Colonic mucosa (tissue), 4 donors: ENCODE measurements at regions of chr17 and their contacts with region 1.

Region 1: DNA sequence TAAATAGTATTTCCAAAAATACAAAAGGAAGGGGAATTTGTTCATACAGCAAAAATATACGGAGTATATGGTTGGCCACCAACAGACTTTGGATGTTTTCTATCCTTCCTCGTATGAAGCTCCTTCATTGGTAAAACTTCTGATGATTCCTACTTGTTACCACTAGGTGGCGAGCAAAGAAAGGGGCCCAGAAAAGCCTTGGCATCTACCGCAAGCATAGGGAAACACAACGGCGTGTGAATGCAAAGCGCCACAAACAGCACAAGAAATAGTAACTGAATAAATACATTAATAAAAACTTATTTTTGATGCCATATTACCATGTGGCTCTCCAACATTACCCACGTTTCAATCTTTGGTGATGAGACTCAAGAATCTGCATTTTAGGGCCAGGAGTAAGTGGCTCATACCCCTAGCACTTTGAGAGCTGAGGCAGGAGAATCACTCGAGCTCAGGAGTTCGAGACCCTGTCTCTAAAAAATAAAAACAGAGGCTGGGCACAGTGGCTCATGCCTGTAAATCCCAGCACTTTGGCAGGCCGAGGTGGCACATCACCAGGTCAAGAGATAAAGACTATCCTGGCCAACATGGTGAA is 34.5 kb downstream of the YWHAE start:
- DNase-seq: peak; percentile 70
- H3K4me3 ChIP-seq: no peak overlapping the region
- H3K27ac ChIP-seq: no peak overlapping the region
- H3K4me1 ChIP-seq: peaks cover 5% of the 10 kb centered on the region
- H3K27me3 ChIP-seq: no peaks in the 10 kb centered on the region
- CTCF ChIP-seq: peak; percentile 70

Region 2: GRCh38 chr17:1039511-1040215 is 325.9 kb before region 1 on chr17:
- intact Hi-C with region 1: no loop called
- DNase-seq: peak; percentile 45
- H3K4me3 ChIP-seq: no peak overlapping the region
- H3K27ac ChIP-seq: peak overlapping the region; percentile 45
- H3K4me1 ChIP-seq: no peaks in the 10 kb centered on the region
- H3K27me3 ChIP-seq: no peaks in the 10 kb centered on the region
- CTCF ChIP-seq: no peak

Region 3: DNA sequence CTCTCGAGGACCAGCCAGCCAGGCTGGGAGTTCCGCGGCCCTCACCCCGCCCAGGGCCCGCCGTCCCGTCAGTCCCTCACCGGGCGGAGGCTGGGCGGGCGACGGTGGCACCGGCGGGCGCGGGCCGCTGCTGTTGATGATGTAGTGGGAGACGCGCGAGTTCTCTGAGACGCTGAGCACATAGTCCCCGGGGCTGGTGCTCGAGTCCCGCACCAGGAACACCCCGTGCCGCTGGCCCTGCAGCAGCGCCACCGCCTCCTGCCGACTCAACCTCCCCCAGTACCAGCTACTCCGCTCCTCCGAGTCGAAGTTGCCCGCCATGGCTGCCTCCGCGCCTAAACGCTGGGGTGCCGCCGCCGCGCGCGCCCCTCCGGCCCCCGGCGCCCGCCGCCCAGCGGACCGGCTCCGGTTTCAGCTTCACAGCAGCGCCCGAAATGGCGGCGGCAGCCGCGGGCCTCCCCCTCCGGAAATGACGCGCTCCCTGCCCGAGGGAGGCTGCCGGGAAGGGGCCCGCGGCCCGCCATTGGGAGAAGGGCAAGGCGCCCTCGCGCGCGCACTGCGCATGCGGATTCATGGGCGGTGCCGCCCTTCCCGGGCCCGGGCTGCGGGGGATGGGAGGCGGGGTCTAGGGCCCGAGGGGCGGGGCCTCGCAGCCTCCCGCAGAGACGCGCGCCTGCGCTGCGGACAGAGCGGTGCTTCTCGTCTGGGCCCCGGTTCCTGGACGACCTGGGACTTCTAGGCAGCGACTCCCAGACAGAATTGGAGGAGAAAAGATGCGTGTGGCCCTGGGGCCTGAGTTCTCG is 90.5 kb after region 1 on chr17 and contains the start of gene CRK:
- intact Hi-C with region 1: loop called (anchors 10 kb)
- DNase-seq: peak; percentile 97
- H3K4me3 ChIP-seq: peak within 1 kb of the TSS; percentile 86
- H3K27ac ChIP-seq: peak within 1 kb of the TSS; percentile 93
- H3K4me1 ChIP-seq: peaks cover 13% of the 10 kb centered on the region
- H3K27me3 ChIP-seq: no peaks in the 10 kb centered on the region
- CTCF ChIP-seq: no peak
- total RNA-seq, gene CRK: 74.5 to 82.0 TPM

Region 4: DNA sequence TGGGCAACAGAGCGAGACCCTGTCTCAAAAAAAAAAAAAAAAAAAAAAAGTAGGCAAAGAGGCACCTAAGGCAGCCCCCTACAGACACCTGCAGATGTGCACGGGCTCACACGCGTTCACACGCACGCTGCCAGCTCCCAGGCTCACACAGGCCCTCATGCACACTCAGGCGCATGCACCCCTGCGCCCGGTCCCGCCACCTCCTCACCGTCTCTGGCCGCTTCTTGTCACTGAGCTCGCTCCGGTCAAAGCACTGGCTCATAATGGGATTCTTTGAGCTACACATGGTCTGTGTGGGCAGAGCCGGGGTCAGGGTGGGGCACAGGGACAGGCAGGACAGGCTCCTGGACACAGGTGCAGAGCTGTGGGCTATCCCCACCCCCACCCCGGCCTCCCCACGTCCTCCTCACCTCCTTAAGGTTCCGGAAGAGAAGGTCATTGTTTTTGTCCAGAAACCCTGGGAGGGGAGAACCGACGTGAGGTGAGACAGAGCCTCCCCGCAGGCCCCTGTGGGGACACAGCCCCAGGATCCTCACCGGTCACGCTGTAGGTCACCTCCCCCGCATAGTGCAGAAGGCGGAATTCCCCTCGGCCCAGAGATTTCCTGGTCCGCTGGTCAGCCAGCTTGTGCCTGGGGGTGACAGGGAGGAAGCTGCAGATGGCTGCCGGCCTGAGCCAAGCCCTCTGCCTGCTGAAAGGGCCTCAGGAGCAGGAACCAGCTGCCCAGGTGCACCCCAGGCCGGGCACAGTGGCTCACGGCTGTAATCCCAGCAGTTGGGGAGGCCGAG is 109.1 kb after region 1 on chr17:
- intact Hi-C with region 1: no loop called
- DNase-seq: no peak
- H3K4me3 ChIP-seq: no peak overlapping the region
- H3K27ac ChIP-seq: no peak overlapping the region
- H3K4me1 ChIP-seq: no peaks in the 10 kb centered on the region
- H3K27me3 ChIP-seq: no peaks in the 10 kb centered on the region
- CTCF ChIP-seq: no peak